Activated naive CD4-positive, alpha-beta T cell treated with anti-CD3 and anti-CD28 coated beads for 36 hours (primary cell): ENCODE measurements at regions of chr18 and their contacts with region 1.

Region 1: GRCh38 chr18:31555971-31556747 is 35.5 kb upstream of the TTR start:
- DNase-seq: peak; percentile 65
- H3K4me3 Mint-ChIP-seq: no peak overlapping the region
- H3K27ac Mint-ChIP-seq: no peak overlapping the region
- H3K4me1 Mint-ChIP-seq: no peaks in the 10 kb centered on the region
- H3K27me3 Mint-ChIP-seq: peaks cover 9% of the 10 kb centered on the region

Region 2: GRCh38 chr18:30971338-30971956 is 584.7 kb before region 1 on chr18:
- CTCF ChIA-PET with region 1: interaction called, 3 read pairs
- intact Hi-C with region 1: loop called (anchors 2 kb)
- DNase-seq: no peak
- H3K4me3 Mint-ChIP-seq: no peak overlapping the region
- H3K27ac Mint-ChIP-seq: no peak overlapping the region
- H3K4me1 Mint-ChIP-seq: no peaks in the 10 kb centered on the region
- H3K27me3 Mint-ChIP-seq: peaks cover 4% of the 10 kb centered on the region

Region 3: DNA sequence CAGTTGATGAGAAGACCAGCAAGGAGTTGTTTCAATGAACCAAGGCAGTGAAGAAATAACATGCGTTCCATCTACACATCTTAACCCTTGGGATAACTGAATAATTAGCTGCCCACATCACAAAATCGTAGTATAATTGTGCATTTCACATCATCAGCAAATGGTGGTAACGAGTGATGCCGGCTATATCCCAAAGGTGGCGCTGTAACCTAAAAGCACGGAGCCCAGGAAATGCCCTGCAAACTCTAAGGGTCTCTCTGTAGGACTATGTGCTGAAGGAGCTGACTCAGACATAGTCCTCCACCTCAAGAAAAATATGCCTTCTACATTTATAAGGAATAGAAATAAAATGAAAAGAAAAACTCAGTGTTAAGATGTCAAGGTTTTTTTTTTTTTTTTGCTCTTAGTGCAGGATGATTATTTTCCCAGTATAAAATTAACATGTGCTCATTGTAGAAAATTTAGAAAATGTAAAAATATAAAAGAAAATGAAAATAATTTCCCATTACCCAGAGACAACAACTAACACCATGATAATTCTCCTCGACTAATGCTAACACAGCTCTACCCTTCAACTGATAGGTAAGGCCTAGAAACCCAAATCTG is 131.7 kb before region 1 on chr18:
- CTCF ChIA-PET with region 1: interaction called, 3 read pairs
- intact Hi-C with region 1: loop called (anchors 5 kb)
- DNase-seq: peak; percentile 32
- H3K4me3 Mint-ChIP-seq: no peak overlapping the region
- H3K27ac Mint-ChIP-seq: no peak overlapping the region
- H3K4me1 Mint-ChIP-seq: no peaks in the 10 kb centered on the region
- H3K27me3 Mint-ChIP-seq: no peaks in the 10 kb centered on the region

Region 4: DNA sequence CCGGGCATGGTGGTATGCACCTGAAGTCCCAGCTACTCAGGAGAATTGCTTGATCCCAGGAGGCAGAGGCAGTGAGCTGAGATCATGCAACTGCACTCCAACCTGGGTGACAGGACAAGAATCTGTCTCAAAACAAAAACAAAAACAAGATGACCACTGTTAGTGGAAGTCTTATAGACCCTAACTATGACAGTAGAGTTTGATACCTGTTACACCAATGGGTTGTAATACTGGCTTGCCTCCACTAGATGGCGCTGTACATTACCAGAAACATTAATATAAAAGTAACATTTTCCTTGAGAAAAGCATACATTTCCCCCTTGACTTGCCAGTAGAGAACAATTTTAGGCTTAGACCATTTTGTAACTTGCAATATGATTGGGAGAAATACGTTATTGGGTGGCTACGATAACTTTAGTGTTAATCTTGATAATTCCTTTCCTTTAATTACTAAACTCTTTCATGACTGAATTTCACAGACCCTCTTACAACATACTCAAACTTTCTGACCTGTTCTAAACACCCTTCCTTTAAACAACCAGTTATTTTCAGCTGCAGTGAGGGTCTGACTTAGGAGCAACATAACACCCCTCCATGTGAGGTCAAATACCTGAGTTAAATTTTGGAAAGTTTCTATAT is 185.1 kb after region 1 on chr18:
- CTCF ChIA-PET with region 1: interaction called, 3 read pairs
- intact Hi-C with region 1: loop called (anchors 1 kb)
- DNase-seq: peak; percentile 78
- H3K4me3 Mint-ChIP-seq: no peak overlapping the region
- H3K27ac Mint-ChIP-seq: no peak overlapping the region
- H3K4me1 Mint-ChIP-seq: no peaks in the 10 kb centered on the region
- H3K27me3 Mint-ChIP-seq: no peaks in the 10 kb centered on the region

Region 5: DNA sequence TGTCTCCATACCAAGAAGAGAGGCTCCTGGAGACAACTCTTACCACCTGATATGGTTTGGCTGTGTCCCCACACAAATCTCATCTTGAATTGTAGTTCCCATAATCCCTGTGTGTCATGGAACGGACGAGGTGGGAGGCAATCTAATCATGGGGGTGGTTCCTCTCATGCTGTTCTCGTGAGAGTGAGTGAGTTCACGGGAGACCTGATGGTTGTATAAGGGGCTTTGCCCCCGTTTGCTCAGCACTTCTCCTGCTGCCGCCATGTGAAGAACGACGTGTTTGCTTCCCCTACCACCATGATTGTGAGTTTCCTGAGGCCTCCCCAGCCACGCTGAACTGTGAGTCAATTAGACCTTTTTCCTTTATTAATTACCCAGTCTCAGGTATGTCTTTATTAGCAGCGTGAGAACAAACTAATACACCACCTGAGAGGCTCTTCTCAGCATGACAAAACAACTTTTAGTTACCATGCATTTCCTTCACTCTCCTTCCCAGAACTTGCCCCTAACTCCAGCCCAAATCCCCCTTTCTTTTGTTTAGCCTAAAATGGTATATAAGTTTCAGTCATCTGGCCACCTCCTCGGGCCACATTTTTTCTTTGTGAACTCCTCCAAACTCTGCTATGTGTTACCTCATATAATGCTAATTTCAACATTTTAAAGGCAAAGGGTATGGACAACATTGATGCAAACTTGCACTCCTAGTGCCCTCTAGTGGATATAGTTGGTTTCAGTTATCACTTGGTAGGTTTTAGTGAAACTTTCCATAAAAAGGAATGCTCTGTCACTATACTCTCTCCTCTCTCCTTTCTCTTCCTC is 263.2 kb after region 1 on chr18:
- CTCF ChIA-PET with region 1: interaction called, 14 read pairs
- intact Hi-C with region 1: loop called (anchors 1 kb)
- DNase-seq: no peak
- H3K4me3 Mint-ChIP-seq: no peak overlapping the region
- H3K27ac Mint-ChIP-seq: no peak overlapping the region
- H3K4me1 Mint-ChIP-seq: no peaks in the 10 kb centered on the region
- H3K27me3 Mint-ChIP-seq: no peaks in the 10 kb centered on the region

Region 6: GRCh38 chr18:31957728-31958127 is 401.6 kb after region 1 on chr18:
- CTCF ChIA-PET with region 1: interaction called, 3 read pairs
- intact Hi-C with region 1: loop called (anchors 1 kb)
- DNase-seq: no peak
- H3K4me3 Mint-ChIP-seq: no peak overlapping the region
- H3K27ac Mint-ChIP-seq: no peak overlapping the region
- H3K4me1 Mint-ChIP-seq: no peaks in the 10 kb centered on the region
- H3K27me3 Mint-ChIP-seq: no peaks in the 10 kb centered on the region

Region 7: GRCh38 chr18:31977270-31977872 is 421.2 kb after region 1 on chr18:
- CTCF ChIA-PET with region 1: no interaction called
- intact Hi-C with region 1: loop called (anchors 1 kb)
- DNase-seq: peak; percentile 31
- H3K4me3 Mint-ChIP-seq: no peak overlapping the region
- H3K27ac Mint-ChIP-seq: no peak overlapping the region
- H3K4me1 Mint-ChIP-seq: no peaks in the 10 kb centered on the region
- H3K27me3 Mint-ChIP-seq: no peaks in the 10 kb centered on the region